Activated T-helper 1 cell treated with anti-CD3 and anti-CD28 coated beads, Interleukin-12 subunit alpha, Interleukin-12 subunit beta, Interleukin-2, Interleukin-4 antibody, amounts not matched to agents 30 ng/mL and 10 ng/mL and 1 ng/mL, durations not matched to agents 14 hours and 24 hours and 36 hours (primary cell): ENCODE measurements at regions of chr1 and their contacts with region 1.

Region 1: DNA sequence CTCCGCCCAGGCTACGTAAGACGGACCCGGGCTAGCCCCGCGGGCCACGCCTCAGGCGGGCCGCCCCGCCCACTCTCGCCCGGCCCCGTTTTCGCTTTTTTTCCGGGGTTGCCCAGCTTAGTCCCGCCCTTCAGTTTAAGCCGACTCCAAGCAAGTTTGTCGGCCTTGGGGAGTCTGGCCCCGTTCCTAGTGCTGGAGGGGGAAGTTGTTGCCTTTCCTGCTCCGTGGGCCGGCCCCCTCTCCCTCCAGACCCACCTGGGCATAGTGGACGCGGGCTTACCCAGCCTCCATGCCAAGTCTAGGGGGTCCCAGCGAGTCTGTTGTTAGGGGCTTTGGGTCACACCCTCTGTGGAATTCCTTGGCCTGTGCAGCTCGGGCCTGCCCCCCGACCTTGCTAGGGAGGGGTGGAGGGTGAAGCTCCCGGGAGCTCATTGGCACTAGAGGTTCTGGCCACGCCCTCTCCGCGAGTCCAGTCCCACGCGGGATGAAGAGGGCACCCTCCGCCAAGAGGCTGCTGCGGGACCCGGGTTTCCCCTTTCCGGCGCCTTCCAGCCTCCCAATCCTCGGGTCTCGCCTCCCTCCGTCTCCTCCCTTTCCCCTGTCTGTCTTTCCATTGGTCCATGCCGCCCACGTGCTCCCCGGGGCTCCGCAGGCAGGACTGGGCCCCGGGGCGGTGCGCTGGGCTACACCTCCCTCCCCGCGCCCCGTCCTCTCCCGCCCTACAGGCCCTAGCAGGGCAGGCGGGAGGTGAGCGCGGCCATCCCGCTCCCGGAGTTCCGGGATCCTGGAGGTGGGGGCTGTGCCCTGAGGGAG is 3.3 kb downstream of the RUSC1 start:
- DNase-seq: peak; percentile 90
- H3K4me3 Mint-ChIP-seq: peak overlapping the region; percentile 86
- H3K27ac Mint-ChIP-seq: peak overlapping the region; percentile 75
- H3K4me1 Mint-ChIP-seq: peaks cover 40% of the 10 kb centered on the region
- H3K27me3 Mint-ChIP-seq: no peaks in the 10 kb centered on the region

Region 2: GRCh38 chr1:155135415-155136028 is 188.5 kb before region 1 on chr1 and contains the start of gene SLC50A1:
- intact Hi-C with region 1: loop called (anchors 5 kb)
- DNase-seq: peak; percentile 91
- H3K4me3 Mint-ChIP-seq: peak within 1 kb of the TSS; percentile 94
- H3K27ac Mint-ChIP-seq: peak within 1 kb of the TSS; percentile 99
- H3K4me1 Mint-ChIP-seq: peaks cover 42% of the 10 kb centered on the region
- H3K27me3 Mint-ChIP-seq: peaks cover 5% of the 10 kb centered on the region
- total RNA-seq, gene SLC50A1: 45.7 and 47.7 TPM in 2 replicates

Region 3: DNA sequence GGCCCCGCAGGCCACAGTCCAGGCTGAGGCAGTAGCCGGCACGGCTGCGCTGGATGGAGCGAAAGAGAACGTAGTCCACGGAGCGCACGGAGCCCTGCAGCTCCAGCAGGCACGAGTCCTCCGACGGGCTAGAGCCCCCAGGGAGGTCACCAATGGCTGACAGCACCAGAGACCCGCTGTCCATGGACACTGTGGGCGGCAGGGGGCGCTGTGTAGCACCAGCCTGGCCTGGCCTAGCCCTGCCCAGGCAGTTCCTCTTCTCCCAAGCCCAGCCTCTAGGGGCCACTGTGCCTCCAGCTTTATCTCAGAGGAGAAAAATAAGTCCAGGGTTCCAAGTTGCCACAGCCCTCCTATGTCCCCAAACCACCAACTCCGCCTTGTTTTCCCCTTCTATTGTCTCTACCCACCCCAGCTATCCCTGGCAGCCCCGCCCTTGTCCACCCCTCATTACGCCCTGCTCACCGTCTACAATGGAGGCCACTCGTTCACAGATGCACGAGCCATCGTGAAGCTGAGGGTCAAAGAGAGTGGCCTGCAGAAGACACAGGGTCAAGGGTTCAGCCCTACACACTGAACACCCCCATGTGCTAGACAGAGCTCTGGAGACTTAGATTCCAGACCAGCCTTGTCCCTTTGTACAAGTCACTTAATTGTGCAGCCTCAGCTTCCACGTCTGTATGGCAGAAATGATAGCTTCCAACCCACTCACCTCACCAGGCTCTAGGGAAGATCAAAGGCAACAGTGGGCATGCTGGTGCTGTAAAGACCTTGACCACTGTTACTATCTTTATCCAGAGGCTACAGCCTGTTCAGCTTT is 73.2 kb before region 1 on chr1:
- intact Hi-C with region 1: loop called (anchors 1 kb)
- DNase-seq: peak; percentile 92
- H3K4me3 Mint-ChIP-seq: peak overlapping the region; percentile 12
- H3K27ac Mint-ChIP-seq: no peak overlapping the region
- H3K4me1 Mint-ChIP-seq: peaks cover 32% of the 10 kb centered on the region
- H3K27me3 Mint-ChIP-seq: no peaks in the 10 kb centered on the region

Region 4: GRCh38 chr1:155308493-155309422 is 15.2 kb before region 1 on chr1 and contains the start of gene FDPS:
- intact Hi-C with region 1: loop called (anchors 1 kb)
- DNase-seq: peak; percentile 98
- H3K4me3 Mint-ChIP-seq: peak within 1 kb of the TSS; percentile 92
- H3K27ac Mint-ChIP-seq: peak within 1 kb of the TSS; percentile 93
- H3K4me1 Mint-ChIP-seq: peaks cover 38% of the 10 kb centered on the region
- H3K27me3 Mint-ChIP-seq: no peaks in the 10 kb centered on the region
- total RNA-seq, gene FDPS: 274 and 289 TPM in 2 replicates

Region 5: DNA sequence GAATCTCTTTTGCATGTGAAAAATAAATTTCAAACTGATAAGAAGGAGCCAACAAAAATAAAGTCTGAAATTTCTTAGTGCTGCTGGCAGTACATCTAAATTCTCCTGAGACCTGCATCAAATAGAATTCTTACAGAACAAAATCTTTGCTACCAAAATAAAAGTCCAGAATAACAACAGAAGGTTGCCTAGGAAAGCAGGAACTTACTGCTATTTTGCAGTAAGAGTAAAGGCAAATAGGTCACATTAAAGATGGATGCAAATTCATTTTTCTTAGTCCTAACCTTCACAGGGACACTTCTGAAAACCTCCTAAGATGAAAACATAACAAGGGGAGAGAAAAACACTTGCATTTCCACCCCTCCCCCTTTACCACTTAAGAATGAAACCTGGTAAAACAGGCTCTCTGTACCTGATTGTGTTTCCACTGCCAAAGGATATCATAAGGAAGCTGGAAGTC is 55.7 kb after region 1 on chr1:
- intact Hi-C with region 1: no loop called
- DNase-seq: no peak
- H3K4me3 Mint-ChIP-seq: no peak overlapping the region
- H3K27ac Mint-ChIP-seq: no peak overlapping the region
- H3K4me1 Mint-ChIP-seq: peaks cover 11% of the 10 kb centered on the region
- H3K27me3 Mint-ChIP-seq: no peaks in the 10 kb centered on the region

Region 6: DNA sequence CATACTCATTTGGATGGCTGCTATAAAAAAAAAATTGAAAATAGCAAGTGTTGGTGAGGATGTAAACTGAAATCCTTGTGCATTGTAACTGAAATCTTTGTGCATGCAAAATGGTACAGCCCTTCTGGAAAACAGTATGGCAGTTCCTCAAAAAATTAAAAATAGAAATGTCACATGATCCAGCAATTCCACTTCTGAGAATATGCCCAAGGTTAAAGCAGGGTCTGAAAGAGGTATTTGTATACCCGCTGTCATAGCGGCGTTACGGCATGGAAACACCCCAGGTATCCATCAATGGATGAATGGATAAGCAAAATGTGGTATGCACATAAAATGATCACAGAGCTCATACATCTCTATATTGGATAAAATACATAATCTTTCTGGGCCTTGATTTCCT is 113.4 kb after region 1 on chr1:
- intact Hi-C with region 1: no loop called
- DNase-seq: no peak
- H3K4me3 Mint-ChIP-seq: no peak overlapping the region
- H3K27ac Mint-ChIP-seq: no peak overlapping the region
- H3K4me1 Mint-ChIP-seq: no peaks in the 10 kb centered on the region
- H3K27me3 Mint-ChIP-seq: no peaks in the 10 kb centered on the region

Region 7: GRCh38 chr1:155911156-155912055 is 587.4 kb after region 1 on chr1 and contains the start of gene RIT1:
- intact Hi-C with region 1: loop called (anchors 1 kb)
- DNase-seq: peak; percentile 81
- H3K4me3 Mint-ChIP-seq: peak within 1 kb of the TSS; percentile 98
- H3K27ac Mint-ChIP-seq: peak within 1 kb of the TSS; percentile 97
- H3K4me1 Mint-ChIP-seq: peaks cover 23% of the 10 kb centered on the region
- H3K27me3 Mint-ChIP-seq: peaks cover 2% of the 10 kb centered on the region
- total RNA-seq, gene RIT1: 20.2 and 22.3 TPM in 2 replicates

Region 8: DNA sequence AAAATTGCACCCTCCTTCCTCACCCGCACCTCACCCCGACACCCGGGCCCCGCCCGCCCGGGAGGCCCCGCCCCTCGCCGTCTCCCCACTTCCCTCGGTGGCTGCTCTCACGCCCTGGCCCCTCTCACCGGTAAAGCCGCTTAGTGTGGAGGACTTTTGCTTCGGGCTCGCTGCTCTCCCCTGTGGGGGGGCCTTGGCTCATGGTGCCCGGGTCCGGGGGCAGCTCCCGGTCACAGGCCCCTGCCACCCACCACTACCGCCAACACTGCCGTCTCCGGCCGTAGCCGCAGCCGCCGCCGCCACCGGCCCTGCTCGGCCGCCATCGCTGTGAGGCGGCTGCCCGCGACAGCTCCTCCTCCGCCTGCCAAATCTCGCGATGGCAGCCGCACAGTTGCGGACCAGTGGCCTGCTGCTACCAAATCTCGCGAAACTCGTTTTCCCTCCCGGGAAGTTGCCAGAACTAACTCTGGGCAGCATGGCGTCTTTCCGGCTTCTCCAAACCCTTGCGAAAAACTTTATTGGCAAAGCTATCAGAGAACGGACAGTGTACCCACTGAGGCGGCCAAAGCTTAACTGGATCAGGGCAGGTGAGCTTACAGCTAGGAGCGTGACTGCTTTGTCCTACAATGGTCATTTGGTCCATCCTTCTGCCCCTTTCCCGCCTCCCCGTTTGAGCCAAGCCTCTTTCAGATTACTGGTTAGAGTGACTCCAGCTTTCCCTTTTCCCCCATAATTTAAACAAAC is 958.6 kb after region 1 on chr1 and contains the start of gene SMG5:
- intact Hi-C with region 1: no loop called
- DNase-seq: peak; percentile 94
- H3K4me3 Mint-ChIP-seq: peak within 1 kb of the TSS; percentile 91
- H3K27ac Mint-ChIP-seq: peak within 1 kb of the TSS; percentile 93
- H3K4me1 Mint-ChIP-seq: peaks cover 44% of the 10 kb centered on the region
- H3K27me3 Mint-ChIP-seq: peaks cover 1% of the 10 kb centered on the region
- total RNA-seq, gene SMG5: 95.6 TPM in 2 replicates